CD4-positive, alpha-beta memory T cell (primary cell): ENCODE measurements at regions of chr6 and their contacts with region 1.

Region 1: GRCh38 chr6:27902335-27903314 is 9.6 kb downstream of the OR2B2 start:
- DNase-seq: peak; percentile 87 to 91 (median 90)
- H3K4me3 ChIP-seq: peak overlapping the region; percentile 53
- H3K4me3 Mint-ChIP-seq: peak overlapping the region; percentile 87 to 98 (median 90)
- H3K27ac ChIP-seq: peak overlapping the region; percentile 51
- H3K27ac Mint-ChIP-seq: peak overlapping the region; percentile 94 to 100 (median 97)
- H3K4me1 ChIP-seq: peaks cover 5% of the 10 kb centered on the region
- H3K4me1 Mint-ChIP-seq: peaks cover 0 to 12% (median 4%) of the 10 kb centered on the region in 4 donors
- H3K27me3 ChIP-seq: peaks cover 4% of the 10 kb centered on the region
- H3K27me3 Mint-ChIP-seq: peaks cover 8 to 10% of the 10 kb centered on the region in 2 donors

Region 2: DNA sequence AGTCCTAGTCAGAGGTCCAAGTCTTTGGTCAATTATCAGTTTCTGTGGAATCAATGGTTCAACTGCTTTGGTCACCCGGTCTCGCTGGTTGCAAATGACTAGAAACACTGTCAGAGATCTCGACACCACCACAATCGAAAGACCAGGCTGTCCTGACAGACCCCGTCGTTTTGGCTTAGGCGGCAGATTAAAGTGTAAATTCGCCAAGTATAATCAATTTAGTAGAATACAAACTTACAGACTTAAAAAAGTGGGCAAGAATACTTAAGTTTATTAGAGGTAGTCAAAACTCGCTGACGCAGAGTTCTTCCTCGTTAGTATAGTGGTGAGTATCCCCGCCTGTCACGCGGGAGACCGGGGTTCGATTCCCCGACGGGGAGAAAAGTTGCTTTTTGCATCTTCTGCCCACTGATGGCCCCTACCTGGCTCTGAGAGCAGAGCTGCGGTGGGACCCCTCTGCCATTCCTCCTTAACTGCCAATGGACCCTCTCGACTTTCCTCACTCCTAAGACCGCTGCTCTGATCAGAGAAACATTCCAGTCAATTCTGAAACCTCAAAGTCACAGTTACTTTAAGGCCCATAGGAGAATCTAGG is 399.1 kb before region 1 on chr6:
- CTCF ChIA-PET with region 1: no interaction called
- POLR2A ChIA-PET with region 1: no interaction called
- intact Hi-C with region 1: loop called (anchors 5 kb)
- DNase-seq: peak; percentile 79 to 82 (median 80)
- H3K4me3 ChIP-seq: peak overlapping the region; percentile 79
- H3K4me3 Mint-ChIP-seq: peak overlapping the region; percentile 87 to 94 (median 90)
- H3K27ac ChIP-seq: peak overlapping the region; percentile 9
- H3K27ac Mint-ChIP-seq: peak overlapping the region; percentile 78 to 99 (median 91)
- H3K4me1 ChIP-seq: peaks cover 36% of the 10 kb centered on the region
- H3K4me1 Mint-ChIP-seq: peaks cover 25 to 44% (median 33%) of the 10 kb centered on the region in 4 donors
- H3K27me3 ChIP-seq: peaks cover 4% of the 10 kb centered on the region
- H3K27me3 Mint-ChIP-seq: peaks cover 0 to 25% of the 10 kb centered on the region in 2 donors

Region 3: DNA sequence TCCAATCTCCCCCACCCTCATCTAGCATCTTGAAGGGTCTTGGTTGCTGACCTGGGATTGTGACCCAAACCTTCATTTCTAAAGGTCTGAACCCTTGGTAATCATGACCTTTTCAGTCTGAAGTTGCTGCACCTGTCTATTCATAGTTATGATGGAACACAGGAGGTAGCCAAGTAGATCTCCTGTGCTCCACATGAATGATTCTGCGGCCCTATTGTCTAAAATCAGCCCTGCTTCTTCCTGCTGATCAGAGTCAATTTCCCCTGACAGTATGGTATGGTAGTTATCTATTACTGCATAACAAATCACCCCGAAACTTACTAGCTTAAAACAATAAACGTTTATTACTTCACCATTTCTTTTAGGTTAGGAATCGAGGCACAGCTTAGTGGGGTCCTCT is 63.4 kb after region 1 on chr6:
- CTCF ChIA-PET with region 1: no interaction called
- POLR2A ChIA-PET with region 1: no interaction called
- intact Hi-C with region 1: no loop called
- DNase-seq: no peak
- H3K4me3 ChIP-seq: no peak overlapping the region
- H3K4me3 Mint-ChIP-seq: no peak overlapping the region
- H3K27ac ChIP-seq: no peak overlapping the region
- H3K27ac Mint-ChIP-seq: no peak overlapping the region
- H3K4me1 ChIP-seq: no peaks in the 10 kb centered on the region
- H3K4me1 Mint-ChIP-seq: no peaks in the 10 kb centered on the region
- H3K27me3 ChIP-seq: no peaks in the 10 kb centered on the region
- H3K27me3 Mint-ChIP-seq: peaks cover 21 to 51% of the 10 kb centered on the region in 2 donors

Region 4: GRCh38 chr6:28124102-28124970 is 221.7 kb after region 1 on chr6 and contains the start of gene ZSCAN16:
- CTCF ChIA-PET with region 1: no interaction called
- POLR2A ChIA-PET with region 1: no interaction called
- intact Hi-C with region 1: loop called (anchors 10 kb)
- DNase-seq: peak; percentile 63 to 79 (median 68)
- H3K4me3 ChIP-seq: peak within 1 kb of the TSS; percentile 70 to 74
- H3K4me3 Mint-ChIP-seq: peak within 1 kb of the TSS; percentile 93 to 98 (median 95)
- H3K27ac ChIP-seq: peak within 1 kb of the TSS; percentile 84
- H3K27ac Mint-ChIP-seq: peak within 1 kb of the TSS; percentile 96 to 99 (median 98)
- H3K4me1 ChIP-seq: peaks cover 24% of the 10 kb centered on the region
- H3K4me1 Mint-ChIP-seq: peaks cover 36 to 52% (median 48%) of the 10 kb centered on the region in 4 donors
- H3K27me3 ChIP-seq: no peaks in the 10 kb centered on the region
- H3K27me3 Mint-ChIP-seq: no peaks in the 10 kb centered on the region
- total RNA-seq, gene ZSCAN16: 13.4 to 14.8 TPM